ENCODE measurements at regions of chr4 and their contacts with region 1.

Region 1: GRCh38 chr4:158161551-158162354 is 11.1 kb downstream of the GASK1B start:
- DNase-seq: no peak
- H3K4me3 ChIP-seq: no peak overlapping the region
- H3K27ac ChIP-seq: peak overlapping the region; percentile 47 to 70 (median 60)
- H3K4me1 ChIP-seq: peaks cover 0 to 34% (median 13%) of the 10 kb centered on the region in 4 donors
- H3K27me3 ChIP-seq: no peaks in the 10 kb centered on the region
- CTCF ChIP-seq: no peak
- EP300 ChIP-seq: no peak
- POLR2A ChIP-seq: no peak

Region 2: GRCh38 chr4:158006990-158007389 is 154.8 kb before region 1 on chr4:
- in situ Hi-C with region 1: loop called in 2 of 4 experiments (anchors 10 kb)
- intact Hi-C with region 1: no loop called
- DNase-seq: no peak
- H3K4me3 ChIP-seq: no peak overlapping the region
- H3K27ac ChIP-seq: peak overlapping the region; percentile 12 to 51 (median 38)
- H3K4me1 ChIP-seq: peaks cover 0 to 10% (median 5%) of the 10 kb centered on the region in 4 donors
- H3K27me3 ChIP-seq: no peaks in the 10 kb centered on the region
- CTCF ChIP-seq: no peak
- EP300 ChIP-seq: no peak
- POLR2A ChIP-seq: no peak

Region 3: GRCh38 chr4:158020176-158020575 is 141.6 kb before region 1 on chr4:
- in situ Hi-C with region 1: loop called in 1 of 4 experiments (anchors 10 kb)
- intact Hi-C with region 1: no loop called
- DNase-seq: peak; percentile 18
- H3K4me3 ChIP-seq: no peak overlapping the region
- H3K27ac ChIP-seq: peak overlapping the region; percentile 36 to 66 (median 64)
- H3K4me1 ChIP-seq: peaks cover 4 to 21% (median 13%) of the 10 kb centered on the region in 4 donors
- H3K27me3 ChIP-seq: no peaks in the 10 kb centered on the region
- CTCF ChIP-seq: no peak
- EP300 ChIP-seq: peak; percentile 26
- POLR2A ChIP-seq: no peak

Region 4: GRCh38 chr4:159360549-159360948 is 1198.8 kb after region 1 on chr4:
- in situ Hi-C with region 1: no loop called
- intact Hi-C with region 1: no loop called
- DNase-seq: no peak
- H3K4me3 ChIP-seq: no peak overlapping the region
- H3K27ac ChIP-seq: no peak overlapping the region
- H3K4me1 ChIP-seq: no peaks in the 10 kb centered on the region
- H3K27me3 ChIP-seq: no peaks in the 10 kb centered on the region
- CTCF ChIP-seq: no peak
- EP300 ChIP-seq: no peak
- POLR2A ChIP-seq: no peak